Transverse colon (tissue), 4 donors: ENCODE measurements at regions of chr12 and their contacts with region 1.

Region 1: DNA sequence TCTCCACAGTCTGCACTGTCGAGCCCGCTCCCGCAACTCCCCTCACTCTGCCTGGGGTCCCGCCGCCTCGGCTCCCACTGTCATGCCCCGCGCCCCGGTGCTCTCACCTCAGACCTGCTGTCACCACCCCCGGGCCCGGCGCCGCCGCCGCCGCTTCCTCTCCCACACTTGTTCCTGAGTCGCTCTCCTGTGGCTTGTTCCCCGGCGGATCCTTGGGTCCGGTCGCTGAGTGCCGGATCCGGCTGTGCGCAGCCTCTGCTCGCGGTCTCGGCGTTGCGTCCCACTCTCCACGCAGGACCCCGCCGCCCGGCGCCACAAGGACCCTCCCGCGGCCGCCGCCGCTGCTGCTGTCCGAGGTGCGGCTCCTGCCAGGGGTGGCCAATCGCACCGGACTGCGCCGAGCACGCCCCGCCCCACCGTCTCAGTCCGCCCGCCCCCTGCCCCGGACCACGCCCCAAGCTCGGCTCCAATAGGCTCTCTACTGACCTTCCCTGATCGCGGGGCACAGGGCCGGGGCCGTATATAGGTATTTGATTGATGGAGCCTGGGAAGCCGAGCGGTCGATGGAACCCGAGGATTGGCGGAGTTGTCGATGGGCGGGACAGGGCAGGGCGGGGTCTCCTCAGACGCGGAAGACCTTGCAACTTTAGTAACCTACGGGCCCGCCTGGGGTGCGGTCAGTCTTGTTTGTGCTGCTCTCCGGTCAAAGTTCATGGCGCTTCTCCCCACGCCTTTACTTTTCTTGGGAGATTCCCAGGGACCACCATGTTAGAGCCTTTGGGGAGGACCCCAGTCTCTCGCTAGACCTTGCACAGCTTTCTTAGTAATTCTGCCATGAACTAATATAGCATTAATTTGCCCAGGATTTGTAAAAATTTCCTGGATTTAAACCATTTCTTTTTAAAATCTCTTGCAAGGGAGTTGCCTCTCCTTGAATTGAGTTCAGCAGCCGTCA is at the start of gene TAOK3:
- DNase-seq: peak; percentile 99
- H3K4me3 ChIP-seq: peak within 1 kb of the TSS; percentile 86 to 94 (median 88)
- H3K27ac ChIP-seq: peak within 1 kb of the TSS; percentile 89 to 95 (median 93)
- H3K4me1 ChIP-seq: peaks cover 14 to 46% (median 31%) of the 10 kb centered on the region in 4 donors
- H3K27me3 ChIP-seq: no peaks in the 10 kb centered on the region
- CTCF ChIP-seq: peak in 1 of 5 experiments; percentile 13
- EP300 ChIP-seq: no peak
- POLR2A ChIP-seq: peak; percentile 90
- total RNA-seq, gene TAOK3: 40.4 to 93.2 (median 79.2) TPM

Region 2: GRCh38 chr12:117646520-117646919 is 726.3 kb before region 1 on chr12:
- in situ Hi-C with region 1: no loop called
- intact Hi-C with region 1: no loop called
- DNase-seq: no peak
- H3K4me3 ChIP-seq: no peak overlapping the region
- H3K27ac ChIP-seq: no peak overlapping the region
- H3K4me1 ChIP-seq: no peaks in the 10 kb centered on the region
- H3K27me3 ChIP-seq: no peaks in the 10 kb centered on the region
- CTCF ChIP-seq: no peak
- EP300 ChIP-seq: no peak
- POLR2A ChIP-seq: no peak

Region 3: DNA sequence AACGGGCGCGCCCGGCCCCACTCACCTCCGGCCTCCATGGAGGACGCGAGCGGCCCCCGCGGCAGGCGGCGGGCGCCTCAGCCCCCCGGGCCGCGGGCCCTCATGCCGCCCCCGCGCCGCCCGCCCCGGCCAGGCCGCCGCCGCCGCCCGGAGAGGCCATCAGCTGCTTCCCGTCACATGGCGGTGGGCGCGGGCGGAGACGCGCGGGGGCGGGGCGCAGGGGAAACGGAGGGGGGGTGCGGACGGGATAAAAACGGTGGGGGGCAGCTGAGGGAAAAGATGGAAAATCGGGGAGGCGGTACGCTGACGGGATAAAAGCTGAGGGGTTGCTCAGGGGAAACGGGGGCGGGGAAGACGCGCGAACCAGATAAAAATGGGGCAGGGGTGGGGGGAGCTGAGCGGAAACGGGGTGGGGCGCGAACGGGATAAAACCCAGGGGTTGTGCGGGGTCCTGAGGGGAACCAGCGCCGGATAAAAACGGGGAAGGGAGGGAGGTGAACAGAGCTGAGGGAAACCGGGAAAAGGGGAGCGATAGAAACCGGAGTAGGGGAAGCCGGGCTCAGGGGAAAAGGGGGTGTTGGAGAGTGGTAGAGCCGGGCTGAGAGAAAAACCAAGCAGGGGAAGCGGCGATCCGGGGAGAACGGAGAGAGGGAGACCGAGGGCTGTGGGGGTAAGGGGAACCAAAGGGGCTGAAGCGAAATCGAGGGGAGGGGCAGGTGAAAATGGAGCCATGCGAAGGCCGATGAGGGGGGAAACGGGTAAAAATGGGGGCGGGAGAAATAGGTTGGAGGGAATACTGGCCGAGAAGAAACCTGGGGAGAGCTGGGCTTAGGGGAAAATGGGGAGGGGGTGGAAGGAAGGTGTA is 311.6 kb before region 1 on chr12 and contains the start of gene WSB2:
- in situ Hi-C with region 1: no loop called
- intact Hi-C with region 1: no loop called
- DNase-seq: peak; percentile 75
- H3K4me3 ChIP-seq: peak within 1 kb of the TSS; percentile 74 to 90 (median 80)
- H3K27ac ChIP-seq: peak within 1 kb of the TSS; percentile 97 to 99 (median 98)
- H3K4me1 ChIP-seq: peaks cover 4 to 65% (median 44%) of the 10 kb centered on the region in 4 donors
- H3K27me3 ChIP-seq: no peaks in the 10 kb centered on the region
- CTCF ChIP-seq: no peak
- EP300 ChIP-seq: no peak
- POLR2A ChIP-seq: peak; percentile 39
- total RNA-seq, gene WSB2: 110 to 193 (median 130) TPM

Region 4: GRCh38 chr12:118183705-118184104 is 189.1 kb before region 1 on chr12:
- in situ Hi-C with region 1: loop called in 3 of 4 experiments (anchors 5 to 25 kb)
- intact Hi-C with region 1: loop called (anchors 5 kb)
- DNase-seq: no peak
- H3K4me3 ChIP-seq: no peak overlapping the region
- H3K27ac ChIP-seq: no peak overlapping the region
- H3K4me1 ChIP-seq: peaks cover 3 to 39% (median 10%) of the 10 kb centered on the region in 4 donors
- H3K27me3 ChIP-seq: no peaks in the 10 kb centered on the region
- CTCF ChIP-seq: no peak
- EP300 ChIP-seq: no peak
- POLR2A ChIP-seq: no peak

Region 5: DNA sequence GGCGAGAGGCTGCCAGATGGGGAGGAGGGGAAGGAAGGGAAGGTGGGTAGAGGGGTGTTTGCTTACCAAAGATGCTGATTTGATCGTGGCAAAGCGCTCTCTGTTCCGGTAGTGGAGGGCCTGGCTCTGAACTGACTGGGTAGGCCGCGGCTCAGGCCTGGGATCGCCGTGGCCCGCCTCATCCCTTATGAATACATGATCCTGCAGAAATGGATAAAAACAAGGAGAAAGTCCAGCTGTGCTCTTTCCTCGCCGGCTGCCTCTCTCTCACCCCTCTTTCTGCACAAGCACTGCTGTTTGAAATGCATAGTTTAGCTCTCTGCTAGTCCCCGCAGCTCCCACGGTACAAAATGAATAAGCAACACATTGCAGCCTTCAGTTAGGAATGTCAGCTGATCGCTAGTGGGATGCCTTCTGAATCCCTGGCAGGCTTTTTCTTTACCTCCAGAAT is 183.1 kb before region 1 on chr12:
- in situ Hi-C with region 1: loop called in 3 of 4 experiments (anchors 5 to 25 kb)
- intact Hi-C with region 1: loop called (anchors 5 kb)
- DNase-seq: no peak
- H3K4me3 ChIP-seq: peak overlapping the region in 3 of 4 donors; percentile 13 to 20 (median 16)
- H3K27ac ChIP-seq: peak overlapping the region; percentile 52 to 83 (median 78)
- H3K4me1 ChIP-seq: peaks cover 3 to 22% (median 4%) of the 10 kb centered on the region in 4 donors
- H3K27me3 ChIP-seq: no peaks in the 10 kb centered on the region
- CTCF ChIP-seq: no peak
- EP300 ChIP-seq: no peak
- POLR2A ChIP-seq: no peak

Region 6: DNA sequence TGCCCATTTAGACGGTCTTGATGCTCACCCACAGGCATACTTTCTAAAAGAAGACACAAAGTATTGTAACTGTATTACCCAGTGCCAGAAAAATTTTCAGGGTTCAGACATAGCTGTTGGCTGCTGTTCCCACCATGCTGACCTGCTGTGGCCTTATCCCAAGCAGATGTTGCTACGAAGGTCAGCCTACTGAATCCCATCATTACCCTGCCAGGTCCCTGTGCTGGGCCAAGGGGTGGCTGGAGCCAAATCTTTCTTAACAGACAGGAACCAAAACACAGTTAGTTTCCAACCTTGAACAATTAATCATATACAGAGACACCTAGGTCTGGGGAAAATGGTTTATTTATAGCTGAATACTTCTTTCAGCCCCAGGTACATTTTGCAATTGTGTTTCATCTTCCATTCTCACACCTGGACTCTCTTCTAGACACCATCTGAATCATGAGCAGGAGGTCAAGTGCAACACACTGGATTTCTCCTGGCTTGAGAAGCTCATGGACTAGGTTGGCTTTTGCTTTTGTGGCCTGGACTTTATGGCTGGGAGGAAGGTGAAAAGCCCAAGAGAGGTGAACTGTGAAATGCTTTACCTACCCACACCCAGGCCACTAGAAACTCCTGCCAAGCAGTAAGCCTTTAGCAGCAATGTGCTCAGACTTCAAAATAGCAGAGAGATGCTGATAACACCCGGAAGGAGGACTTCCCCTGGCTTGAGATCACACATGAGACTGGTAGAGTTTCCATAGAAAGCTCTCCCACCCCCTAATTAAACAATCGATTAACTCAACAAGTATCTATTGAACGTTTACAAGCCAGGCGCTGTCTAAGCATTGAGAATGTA is 153.7 kb after region 1 on chr12:
- in situ Hi-C with region 1: no loop called
- intact Hi-C with region 1: no loop called
- DNase-seq: no peak
- H3K4me3 ChIP-seq: no peak overlapping the region
- H3K27ac ChIP-seq: no peak overlapping the region
- H3K4me1 ChIP-seq: no peaks in the 10 kb centered on the region
- H3K27me3 ChIP-seq: no peaks in the 10 kb centered on the region
- CTCF ChIP-seq: no peak
- EP300 ChIP-seq: no peak
- POLR2A ChIP-seq: no peak

Region 7: GRCh38 chr12:118964988-118965387 is 592.2 kb after region 1 on chr12:
- in situ Hi-C with region 1: no loop called
- intact Hi-C with region 1: no loop called
- DNase-seq: no peak
- H3K4me3 ChIP-seq: no peak overlapping the region
- H3K27ac ChIP-seq: no peak overlapping the region
- H3K4me1 ChIP-seq: no peaks in the 10 kb centered on the region
- H3K27me3 ChIP-seq: no peaks in the 10 kb centered on the region
- CTCF ChIP-seq: no peak
- EP300 ChIP-seq: no peak
- POLR2A ChIP-seq: no peak